Activated CD8-positive, alpha-beta memory T cell treated with anti-CD3 and anti-CD28 coated beads, Interleukin-2, amount 10 ng/mL, durations not matched to agents 7 days and 5 days (primary cell): ENCODE measurements at regions of chr11 and their contacts with region 1.

Region 1: DNA sequence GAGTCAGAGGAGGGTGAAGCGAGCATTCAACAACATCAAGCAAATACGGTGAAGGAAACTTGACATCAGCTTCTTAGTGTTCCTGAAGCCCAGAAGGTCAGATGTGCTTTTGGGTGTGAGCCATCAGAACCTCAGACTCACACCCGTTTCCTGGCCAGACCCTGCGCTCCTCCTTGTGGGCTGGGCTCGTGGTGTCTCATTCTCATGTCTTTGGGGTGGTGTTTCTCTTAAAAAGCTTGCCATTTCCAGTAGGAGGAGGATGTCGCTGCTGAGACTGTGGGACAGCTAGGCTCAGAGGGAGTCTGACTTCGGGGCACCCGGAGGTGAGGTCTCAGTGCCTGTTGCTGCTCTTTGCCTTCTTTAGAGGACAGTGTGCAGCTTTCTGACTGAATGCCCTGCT is 24.2 kb downstream of the PPFIBP2 start:
- DNase-seq: peak; percentile 66
- ATAC-seq: peak; percentile 78
- H3K4me3 Mint-ChIP-seq: peak overlapping the region; percentile 3
- H3K27ac Mint-ChIP-seq: peak overlapping the region; percentile 67
- H3K4me1 Mint-ChIP-seq: peaks cover 54% of the 10 kb centered on the region
- H3K27me3 Mint-ChIP-seq: peaks cover 19% of the 10 kb centered on the region

Region 2: DNA sequence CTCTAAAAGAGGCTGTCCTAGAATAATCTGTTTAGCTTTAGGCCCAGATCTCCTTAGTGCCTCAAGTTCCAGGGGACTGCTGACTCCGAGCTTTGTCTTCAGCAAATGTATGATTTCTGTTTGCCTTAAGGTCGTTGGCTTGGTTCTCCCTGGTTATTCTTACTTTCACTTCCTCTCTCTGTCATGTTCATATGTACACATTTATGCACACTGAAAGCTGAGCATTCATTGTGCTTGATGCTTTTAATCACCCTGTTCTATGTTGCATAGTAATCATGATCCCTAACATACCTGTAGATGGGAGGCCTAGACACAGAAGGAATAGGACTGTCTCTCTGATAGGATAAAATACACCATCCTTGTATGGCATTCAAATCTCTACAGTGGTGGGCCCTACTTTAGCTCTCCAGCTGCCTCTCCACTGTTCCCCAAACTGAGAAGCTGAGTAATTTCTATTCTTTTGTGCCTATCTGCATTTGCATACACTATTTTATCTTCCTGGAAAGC is 17.0 kb before region 1 on chr11:
- CTCF ChIA-PET with region 1: interaction called, 11 read pairs
- DNase-seq: no peak
- ATAC-seq: peak; percentile 36
- H3K4me3 Mint-ChIP-seq: no peak overlapping the region
- H3K27ac Mint-ChIP-seq: no peak overlapping the region
- H3K4me1 Mint-ChIP-seq: peaks cover 20% of the 10 kb centered on the region
- H3K27me3 Mint-ChIP-seq: peaks cover 9% of the 10 kb centered on the region